Left ventricle myocardium inferior (tissue), 1 donor: ENCODE measurements at regions of chr9 and their contacts with region 1.

Region 1: DNA sequence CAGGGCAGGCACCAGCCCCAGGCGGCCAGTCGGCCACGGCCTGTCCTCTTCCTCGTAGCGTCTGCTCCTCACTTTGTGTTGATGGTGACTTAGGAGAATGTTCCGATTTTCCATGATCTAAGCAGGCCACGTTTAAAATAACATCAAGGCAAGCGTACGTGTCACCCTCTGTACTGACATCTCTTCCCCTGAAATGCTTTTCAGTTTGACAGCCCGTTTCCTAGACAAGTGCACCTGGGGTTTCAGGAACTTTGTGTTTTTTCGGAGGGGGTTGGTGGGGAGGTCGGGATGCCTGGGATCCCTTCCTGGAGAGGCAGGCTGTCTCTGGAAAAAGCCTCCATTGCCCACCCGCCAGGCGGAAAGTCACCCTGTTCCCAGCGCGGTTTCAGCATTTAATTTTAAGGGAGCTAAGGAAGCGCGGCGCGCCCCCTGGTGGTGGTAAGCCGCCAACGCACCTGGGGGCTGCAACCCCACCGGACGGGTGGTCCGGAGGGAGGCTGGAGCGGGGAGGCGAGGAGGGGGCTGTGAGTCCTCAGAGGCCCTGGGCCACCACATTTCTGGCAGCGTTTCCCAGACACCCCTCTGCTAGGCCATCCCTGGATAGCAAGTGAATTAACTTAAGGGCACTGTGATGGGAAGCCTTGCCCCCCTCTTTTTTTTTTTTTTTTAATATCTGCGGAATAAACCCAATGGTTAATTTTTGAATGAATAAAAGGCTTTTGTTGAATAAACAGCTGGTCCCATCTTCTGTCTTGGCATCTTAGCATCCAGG is 29.5 kb upstream of the HMCN2 start:
- DNase-seq: peak; percentile 65
- H3K4me3 ChIP-seq: peak overlapping the region; percentile 18
- H3K27ac ChIP-seq: no peak overlapping the region
- H3K4me1 ChIP-seq: peaks cover 7% of the 10 kb centered on the region
- H3K27me3 ChIP-seq: no peaks in the 10 kb centered on the region
- CTCF ChIP-seq: peak; percentile 99

Region 2: GRCh38 chr9:129884220-129885017 is 351.7 kb before region 1 on chr9:
- intact Hi-C with region 1: loop called (anchors 10 kb)
- DNase-seq: peak; percentile 90
- H3K4me3 ChIP-seq: peak overlapping the region; percentile 66
- H3K27ac ChIP-seq: peak overlapping the region; percentile 92
- H3K4me1 ChIP-seq: peaks cover 55% of the 10 kb centered on the region
- H3K27me3 ChIP-seq: no peaks in the 10 kb centered on the region
- CTCF ChIP-seq: no peak

Region 3: GRCh38 chr9:130107234-130107861 is 128.7 kb before region 1 on chr9:
- intact Hi-C with region 1: loop called (anchors 5 kb)
- DNase-seq: peak; percentile 75
- H3K4me3 ChIP-seq: no peak overlapping the region
- H3K27ac ChIP-seq: no peak overlapping the region
- H3K4me1 ChIP-seq: peaks cover 12% of the 10 kb centered on the region
- H3K27me3 ChIP-seq: no peaks in the 10 kb centered on the region
- CTCF ChIP-seq: peak; percentile 83

Region 4: GRCh38 chr9:130193531-130194377 is 42.3 kb before region 1 on chr9:
- intact Hi-C with region 1: no loop called
- DNase-seq: no peak
- H3K4me3 ChIP-seq: no peak overlapping the region
- H3K27ac ChIP-seq: no peak overlapping the region
- H3K4me1 ChIP-seq: peaks cover 15% of the 10 kb centered on the region
- H3K27me3 ChIP-seq: peaks cover 28% of the 10 kb centered on the region
- CTCF ChIP-seq: no peak